ENCODE measurements at regions of chr3 and their contacts with region 1.

Region 1: GRCh38 chr3:155352900-155353490 is 59.5 kb upstream of the STRIT1 start:
- DNase-seq: peak; percentile 21
- ATAC-seq: peak; percentile 34; the same call in 1 of the 3 replicates
- H3K4me3 ChIP-seq: no peak overlapping the region
- H3K27ac ChIP-seq: no peak overlapping the region
- H3K4me1 ChIP-seq: peaks cover 12% of the 10 kb centered on the region
- H3K27me3 ChIP-seq: no peaks in the 10 kb centered on the region
- CTCF ChIP-seq: peak; percentile 57
- EP300 ChIP-seq: no peak
- POLR2A ChIP-seq: no peak
- RAD21 ChIP-seq: no peak

Region 2: DNA sequence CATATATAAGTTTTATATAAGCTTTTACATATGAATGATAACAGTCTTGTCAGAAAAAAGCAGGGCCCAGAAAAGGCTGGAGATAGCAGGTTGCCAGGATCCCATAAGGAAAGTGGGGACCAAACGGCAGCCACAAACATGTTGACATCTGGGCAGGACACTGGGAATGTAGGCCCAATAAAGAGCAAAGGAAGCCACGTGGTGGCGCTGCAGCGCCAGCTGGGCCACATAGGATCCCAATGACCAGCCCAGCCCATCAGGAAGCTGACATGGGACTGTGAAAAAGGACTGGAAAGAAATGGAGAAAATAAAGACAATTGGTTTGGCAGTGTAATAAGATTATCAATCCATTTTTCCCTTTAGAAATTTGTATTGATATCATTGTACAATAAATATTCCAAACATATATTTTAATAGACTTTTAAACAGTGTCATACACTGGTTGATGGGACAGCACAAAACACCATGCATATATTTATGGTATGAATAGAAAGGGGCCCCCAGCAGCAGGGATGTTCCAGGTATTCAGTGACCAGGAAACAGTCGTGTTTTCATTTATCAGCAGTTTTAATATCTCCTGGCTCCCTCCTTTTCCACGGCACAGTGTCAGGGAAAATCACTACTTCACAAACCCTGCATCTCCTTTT is 29.5 kb after region 1 on chr3:
- CTCF ChIA-PET with region 1: interaction called, 5 read pairs
- POLR2A ChIA-PET with region 1: no interaction called
- in situ Hi-C with region 1: no loop called
- intact Hi-C with region 1: loop called (anchors 1 kb)
- DNase-seq: peak; percentile 53
- ATAC-seq: peak; percentile 100
- H3K4me3 ChIP-seq: no peak overlapping the region
- H3K27ac ChIP-seq: no peak overlapping the region
- H3K4me1 ChIP-seq: no peaks in the 10 kb centered on the region
- H3K27me3 ChIP-seq: peaks cover 0 to 2% of the 10 kb centered on the region in 2 experiments; a peak in 1 of 5 replicates
- CTCF ChIP-seq: peak; percentile 93
- EP300 ChIP-seq: no peak
- POLR2A ChIP-seq: no peak
- RAD21 ChIP-seq: peak; percentile 90

Region 3: GRCh38 chr3:155859859-155860258 is 506.9 kb after region 1 on chr3:
- CTCF ChIA-PET with region 1: no interaction called
- POLR2A ChIA-PET with region 1: no interaction called
- in situ Hi-C with region 1: loop called (anchors 10 kb)
- intact Hi-C with region 1: loop called (anchors 10 kb)
- DNase-seq: peak; percentile 44
- ATAC-seq: peak; percentile 79
- H3K4me3 ChIP-seq: peak overlapping the region in 2 of 3 experiments; percentile 29 to 42; a peak in 3 of 6 replicates
- H3K27ac ChIP-seq: no peak overlapping the region
- H3K4me1 ChIP-seq: peaks cover 28% of the 10 kb centered on the region
- H3K27me3 ChIP-seq: no peaks in the 10 kb centered on the region
- CTCF ChIP-seq: peak; percentile 54
- EP300 ChIP-seq: no peak
- POLR2A ChIP-seq: no peak
- RAD21 ChIP-seq: no peak

Region 4: GRCh38 chr3:155960060-155960459 is 607.1 kb after region 1 on chr3:
- CTCF ChIA-PET with region 1: no interaction called
- POLR2A ChIA-PET with region 1: no interaction called
- in situ Hi-C with region 1: loop called (anchors 25 kb)
- intact Hi-C with region 1: no loop called
- DNase-seq: no peak
- ATAC-seq: no peak
- H3K4me3 ChIP-seq: no peak overlapping the region
- H3K27ac ChIP-seq: no peak overlapping the region
- H3K4me1 ChIP-seq: no peaks in the 10 kb centered on the region
- H3K27me3 ChIP-seq: no peaks in the 10 kb centered on the region
- CTCF ChIP-seq: no peak
- EP300 ChIP-seq: no peak
- POLR2A ChIP-seq: no peak
- RAD21 ChIP-seq: no peak